ENCODE measurements at regions of chr12 and their contacts with region 1.

Region 1: DNA sequence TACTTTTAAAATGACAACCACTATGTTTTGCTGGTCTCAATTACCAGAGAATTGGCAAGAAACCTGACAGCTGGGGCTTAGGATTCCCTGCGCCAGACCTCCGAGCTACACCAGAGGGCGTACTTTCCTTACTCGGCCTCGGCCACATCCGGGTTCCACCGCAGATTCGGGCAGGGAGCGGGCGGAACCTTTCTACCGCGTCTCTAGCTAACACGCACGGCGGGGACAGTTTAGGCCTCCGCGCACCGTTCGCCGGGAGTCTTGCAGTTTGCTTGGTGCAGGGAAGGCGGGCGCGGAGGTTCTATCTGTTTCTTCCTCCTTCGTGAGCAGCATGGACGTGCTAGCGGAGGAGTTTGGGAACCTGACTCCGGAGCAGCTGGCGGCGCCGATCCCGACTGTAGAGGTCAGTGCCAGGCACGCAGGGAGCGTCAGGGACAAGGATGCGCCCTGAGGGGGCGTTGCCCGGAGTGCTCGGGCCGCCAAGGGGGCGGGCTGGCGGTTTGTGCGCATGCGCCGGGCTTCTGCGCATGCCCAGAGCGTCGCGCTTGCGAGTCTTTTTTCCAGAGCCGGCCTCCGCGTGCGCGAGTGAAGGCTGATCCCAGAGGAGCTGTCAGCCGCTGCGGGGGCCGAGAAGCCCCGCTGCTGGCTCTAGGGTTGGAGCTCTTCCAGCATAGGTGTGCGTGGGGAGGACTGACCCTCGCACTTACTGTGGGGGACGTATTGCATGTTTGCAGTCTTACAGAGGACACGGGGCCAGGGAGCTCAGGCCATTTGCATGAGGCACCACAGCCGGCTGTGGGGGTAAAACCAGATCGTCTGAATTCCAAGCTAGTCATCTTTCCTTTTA is at the start of gene POLR3B:
- DNase-seq: peak; percentile 96
- H3K4me3 ChIP-seq: peak within 1 kb of the TSS; percentile 82 to 87
- H3K27ac ChIP-seq: peak within 1 kb of the TSS; percentile 91 to 98
- H3K4me1 ChIP-seq: peaks cover 0 to 7% of the 10 kb centered on the region in 2 experiments; a peak in 2 of 4 replicates
- H3K27me3 ChIP-seq: no peaks in the 10 kb centered on the region
- CTCF ChIP-seq: peak; percentile 83
- EP300 ChIP-seq: peak in 1 of 2 experiments; percentile 39; a peak in 2 of 4 replicates
- RAD21 ChIP-seq: peak; percentile 76
- polyA plus RNA-seq, gene POLR3B: 3.3 and 3.9 TPM in 2 replicates

Region 2: DNA sequence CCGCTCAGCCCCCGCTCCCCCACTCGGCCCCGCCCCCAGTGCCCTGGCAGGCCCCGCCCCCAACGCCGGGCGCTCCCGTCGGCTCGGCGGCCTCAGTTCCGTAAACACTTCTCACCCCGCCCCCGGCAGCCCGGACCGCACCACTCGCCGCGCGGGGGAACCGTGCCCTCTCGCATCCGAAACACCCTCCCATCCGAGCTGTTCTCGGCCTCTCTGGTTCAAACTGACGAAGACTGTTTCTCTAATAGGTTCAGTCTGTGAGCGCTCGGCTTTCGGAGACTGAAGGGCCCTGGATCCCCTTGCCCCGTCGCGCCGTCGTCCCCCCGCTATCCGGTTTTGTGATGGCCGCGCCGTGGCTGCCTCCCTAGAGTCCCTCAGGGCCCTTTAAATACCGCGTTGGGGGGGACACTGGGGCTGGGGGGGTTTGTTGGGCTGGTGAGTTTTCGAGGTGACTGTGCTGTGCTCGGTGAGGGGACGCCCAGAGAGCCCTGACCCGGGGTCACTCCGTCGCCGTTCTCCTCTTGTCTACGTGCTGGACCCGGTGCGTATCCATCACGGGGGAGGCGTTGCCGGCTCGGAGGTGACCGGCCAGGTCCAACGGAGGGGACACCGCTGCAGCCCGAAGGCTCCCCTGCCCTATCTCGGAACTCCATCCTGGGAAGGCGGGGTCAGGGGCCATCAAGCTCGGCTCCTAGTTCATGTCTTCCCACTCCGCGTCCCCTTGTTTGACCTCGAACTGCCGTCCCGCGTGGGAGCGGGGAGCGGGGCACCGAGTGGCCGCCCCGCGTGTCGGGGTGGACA is 55.2 kb before region 1 on chr12 and contains the start of gene TCP11L2:
- CTCF ChIA-PET with region 1: interaction called, 20 read pairs
- POLR2A ChIA-PET with region 1: no interaction called
- DNase-seq: peak; percentile 97
- H3K4me3 ChIP-seq: peak within 1 kb of the TSS; percentile 92 to 96
- H3K27ac ChIP-seq: peak within 1 kb of the TSS; percentile 83 to 93
- H3K4me1 ChIP-seq: peaks cover 8 to 11% of the 10 kb centered on the region in 2 experiments; a peak in 2 of 4 replicates
- H3K27me3 ChIP-seq: no peaks in the 10 kb centered on the region
- CTCF ChIP-seq: no peak
- EP300 ChIP-seq: peak in 1 of 2 experiments; percentile 60; a peak in 2 of 4 replicates
- RAD21 ChIP-seq: no peak
- polyA plus RNA-seq, gene TCP11L2: 4.0 and 5.5 TPM in 2 replicates

Region 3: DNA sequence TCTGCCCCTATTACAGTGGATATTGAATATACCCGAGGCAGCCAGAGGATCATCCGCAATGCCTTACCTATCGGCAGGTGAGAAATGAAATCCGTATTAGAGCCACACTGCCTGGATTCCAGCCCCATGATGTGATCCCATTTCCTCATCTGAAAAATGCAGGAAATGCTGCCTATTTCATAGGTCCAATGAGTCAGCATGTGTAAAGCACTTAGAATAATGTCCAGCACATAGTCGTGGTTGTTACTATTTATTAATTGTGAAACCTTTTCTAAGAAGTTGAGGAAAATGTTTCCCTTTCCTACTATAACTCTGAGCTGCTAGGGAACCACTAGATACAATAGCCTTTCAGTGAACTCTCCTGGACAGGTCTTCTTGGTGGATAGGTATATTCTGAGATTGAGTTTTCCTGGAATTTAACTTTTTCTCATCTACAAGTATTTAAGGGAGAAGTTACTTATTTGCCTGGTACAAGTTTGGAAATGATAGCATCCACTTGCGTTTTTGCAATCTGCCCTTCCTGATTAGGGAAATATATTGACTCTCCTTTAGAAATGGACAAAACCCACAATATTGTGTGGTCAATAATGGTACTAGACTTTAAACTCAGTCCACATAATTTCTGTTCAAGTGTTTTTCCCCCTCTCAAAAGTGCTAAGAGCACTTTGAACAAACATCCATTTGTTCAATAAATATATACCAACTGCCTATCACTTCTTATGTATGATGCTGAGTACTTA is 12.0 kb after region 1 on chr12:
- CTCF ChIA-PET with region 1: interaction called, 14 read pairs
- POLR2A ChIA-PET with region 1: no interaction called
- DNase-seq: no peak
- H3K4me3 ChIP-seq: no peak overlapping the region
- H3K27ac ChIP-seq: peak overlapping the region; percentile 18 to 59; a peak in 3 of 4 replicates
- H3K4me1 ChIP-seq: 0 out of 4 replicates have a peak, but pooled peaks cover 0 to 3% of the 10 kb centered on the region in 2 experiments
- H3K27me3 ChIP-seq: no peaks in the 10 kb centered on the region
- CTCF ChIP-seq: no peak
- EP300 ChIP-seq: peak in 1 of 2 experiments; percentile 36; a peak in 1 of 4 replicates
- RAD21 ChIP-seq: no peak

Region 4: DNA sequence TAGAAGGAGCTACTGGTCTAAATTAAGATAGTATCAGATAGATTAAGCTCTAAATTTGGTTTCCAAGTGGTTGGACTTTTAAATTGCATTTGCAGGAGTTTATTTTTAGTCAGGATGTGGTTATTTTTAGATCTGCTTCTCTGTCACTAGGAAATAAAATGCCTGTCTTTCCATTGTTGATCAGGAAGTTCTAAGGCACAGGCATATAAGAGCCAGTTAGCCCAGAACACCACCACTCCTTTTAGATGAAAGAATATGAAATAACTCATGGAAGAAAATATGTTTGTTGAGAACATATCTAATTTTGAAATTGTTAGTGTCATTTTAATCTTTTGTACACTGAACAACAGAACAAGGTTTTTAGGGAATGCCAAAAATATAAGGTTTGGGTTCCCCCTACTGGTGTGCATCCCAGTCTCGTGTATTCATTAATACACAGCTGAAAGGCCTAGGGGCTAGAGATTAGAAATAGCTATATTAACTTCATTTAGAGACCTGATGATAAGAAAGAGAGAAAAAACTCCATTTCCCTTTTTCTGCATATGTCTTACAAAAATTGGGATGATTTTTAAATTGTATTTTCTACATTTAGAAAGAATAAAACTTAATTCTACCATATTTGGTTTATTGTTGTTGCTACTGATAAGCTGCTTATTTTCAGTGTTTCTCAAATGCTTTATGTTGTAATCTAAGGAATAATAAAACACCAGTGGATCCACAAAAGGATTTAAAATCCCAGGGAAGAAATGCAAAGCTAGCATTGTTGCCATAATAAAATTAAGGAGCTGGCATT is 483.9 kb after region 1 on chr12:
- CTCF ChIA-PET with region 1: interaction called, 15 read pairs
- POLR2A ChIA-PET with region 1: interaction called, 4 read pairs
- DNase-seq: peak; percentile 65
- H3K4me3 ChIP-seq: peak overlapping the region in 1 of 2 experiments; percentile 8; a peak in 1 of 4 replicates
- H3K27ac ChIP-seq: peak overlapping the region; percentile 55 to 60
- H3K4me1 ChIP-seq: peaks cover 9 to 27% of the 10 kb centered on the region in 2 experiments; a peak in 2 of 4 replicates
- H3K27me3 ChIP-seq: no peaks in the 10 kb centered on the region
- CTCF ChIP-seq: peak; percentile 88
- EP300 ChIP-seq: peak; percentile 5 to 32; a peak in 2 of 4 replicates
- RAD21 ChIP-seq: peak; percentile 86

Measured in SK-N-SH (cell line).